Activated naive CD8-positive, alpha-beta T cell treated with anti-CD3 and anti-CD28 coated beads, Interleukin-2, amount 10 ng/mL, durations not matched to agents 7 days and 5 days (primary cell): ENCODE measurements at regions of chr19 and their contacts with region 1.

Region 1: DNA sequence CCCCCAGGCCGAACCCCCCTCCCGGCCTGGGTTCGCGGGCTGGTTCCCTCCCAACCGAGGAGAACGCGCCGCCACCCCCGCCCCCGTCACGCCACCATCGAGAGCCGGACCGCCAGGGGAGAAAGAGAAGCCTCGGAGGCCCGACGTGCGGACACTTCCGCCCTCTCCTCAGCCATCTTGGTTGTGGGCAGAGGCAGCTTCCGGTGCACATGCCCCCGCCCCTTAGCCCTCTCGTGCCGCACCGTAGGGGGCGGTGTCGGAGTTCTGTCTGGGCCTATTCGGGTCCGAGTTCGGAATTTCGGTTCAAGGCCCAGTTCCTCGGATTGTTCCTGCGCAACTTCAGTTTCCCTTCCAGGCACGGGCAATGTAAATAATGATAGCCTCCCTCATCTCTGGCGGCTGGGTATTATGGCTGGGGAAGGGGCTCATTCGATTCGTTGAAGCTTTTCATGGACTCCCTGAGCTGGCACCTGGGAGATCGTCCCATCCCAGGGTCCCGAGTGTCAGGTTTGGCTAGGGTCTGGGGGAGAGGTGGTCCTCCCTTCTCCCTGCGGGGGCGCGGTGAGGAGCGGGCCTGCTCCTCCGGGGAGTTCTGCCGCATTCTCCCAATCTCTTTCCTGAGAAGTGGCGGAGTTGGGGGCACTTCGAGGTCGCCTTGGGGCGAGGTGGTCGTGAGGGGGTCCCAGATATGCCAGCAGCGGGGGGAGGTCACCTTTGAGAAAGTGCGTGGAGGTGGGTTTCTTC is at the starts of genes IER2 and STX10:
- DNase-seq: peak; percentile 91
- ATAC-seq: peak; percentile 47
- H3K4me3 Mint-ChIP-seq: peak within 1 kb of the TSS; percentile 98
- H3K27ac Mint-ChIP-seq: peak within 1 kb of the TSS; percentile 100
- H3K4me1 Mint-ChIP-seq: peaks cover 13% of the 10 kb centered on the region
- H3K27me3 Mint-ChIP-seq: no peaks in the 10 kb centered on the region
- total RNA-seq, gene IER2: 167 to 178 TPM
- total RNA-seq, gene STX10: 67.1 to 69.9 TPM

Region 2: GRCh38 chr19:13104360-13104847 is 46.0 kb before region 1 on chr19:
- POLR2A ChIA-PET with region 1: interaction called, 15 read pairs
- DNase-seq: peak; percentile 83
- ATAC-seq: peak; percentile 38
- H3K4me3 Mint-ChIP-seq: peak overlapping the region; percentile 93
- H3K27ac Mint-ChIP-seq: peak overlapping the region; percentile 92
- H3K4me1 Mint-ChIP-seq: peaks cover 21% of the 10 kb centered on the region
- H3K27me3 Mint-ChIP-seq: no peaks in the 10 kb centered on the region

Region 3: GRCh38 chr19:13162518-13163314 is 12.4 kb after region 1 on chr19:
- POLR2A ChIA-PET with region 1: interaction called, 267 read pairs
- DNase-seq: peak; percentile 91
- ATAC-seq: peak; percentile 59
- H3K4me3 Mint-ChIP-seq: peak overlapping the region; percentile 92
- H3K27ac Mint-ChIP-seq: peak overlapping the region; percentile 96
- H3K4me1 Mint-ChIP-seq: peaks cover 52% of the 10 kb centered on the region
- H3K27me3 Mint-ChIP-seq: no peaks in the 10 kb centered on the region

Region 4: DNA sequence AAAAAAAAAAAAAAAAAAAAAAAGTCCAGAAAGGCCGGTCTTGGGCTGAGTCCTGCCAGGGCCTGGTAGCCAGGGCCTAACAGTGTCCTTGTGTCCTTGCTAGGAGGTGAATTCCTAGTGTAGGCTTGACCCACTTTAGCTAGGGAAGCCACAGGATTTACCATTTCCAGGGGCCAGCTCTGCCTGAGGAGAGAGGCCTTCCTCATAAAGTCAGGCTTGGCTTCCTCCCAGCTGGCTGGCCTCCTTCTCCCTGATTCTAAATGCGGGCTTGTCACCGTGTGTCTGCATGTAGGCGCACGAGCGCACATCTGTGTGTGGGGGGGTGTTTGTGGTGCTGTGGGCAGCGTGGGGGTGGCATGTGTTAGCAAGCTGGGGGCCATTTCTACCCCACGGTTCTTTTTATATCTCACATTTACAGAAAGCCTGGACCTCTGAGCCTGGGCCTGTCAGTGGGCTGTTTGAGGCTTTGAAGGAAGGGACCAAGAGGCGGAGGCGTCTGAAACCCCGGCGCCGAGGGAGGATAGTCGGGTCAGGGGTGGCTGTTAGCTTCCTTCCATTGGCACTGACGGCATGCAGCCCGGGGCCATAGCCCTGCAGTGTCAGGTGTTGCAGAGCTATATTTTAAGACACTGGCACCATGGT is 31.5 kb after region 1 on chr19:
- POLR2A ChIA-PET with region 1: interaction called, 31 read pairs
- DNase-seq: no peak
- ATAC-seq: peak; percentile 44
- H3K4me3 Mint-ChIP-seq: no peak overlapping the region
- H3K27ac Mint-ChIP-seq: peak overlapping the region; percentile 82
- H3K4me1 Mint-ChIP-seq: peaks cover 19% of the 10 kb centered on the region
- H3K27me3 Mint-ChIP-seq: no peaks in the 10 kb centered on the region

Region 5: GRCh38 chr19:13234518-13234917 is 84.2 kb after region 1 on chr19:
- POLR2A ChIA-PET with region 1: interaction called, 10 read pairs
- DNase-seq: peak; percentile 72
- ATAC-seq: peak; percentile 75
- H3K4me3 Mint-ChIP-seq: peak overlapping the region; percentile 47
- H3K27ac Mint-ChIP-seq: peak overlapping the region; percentile 72
- H3K4me1 Mint-ChIP-seq: peaks cover 13% of the 10 kb centered on the region
- H3K27me3 Mint-ChIP-seq: no peaks in the 10 kb centered on the region

Region 6: GRCh38 chr19:13284929-13285928 is 134.9 kb after region 1 on chr19:
- POLR2A ChIA-PET with region 1: no interaction called
- DNase-seq: no peak
- ATAC-seq: no peak
- H3K4me3 Mint-ChIP-seq: no peak overlapping the region
- H3K27ac Mint-ChIP-seq: no peak overlapping the region
- H3K4me1 Mint-ChIP-seq: peaks cover 1% of the 10 kb centered on the region
- H3K27me3 Mint-ChIP-seq: peaks cover 2% of the 10 kb centered on the region